ENCODE measurements at regions of chr12 and their contacts with region 1.

Region 1: DNA sequence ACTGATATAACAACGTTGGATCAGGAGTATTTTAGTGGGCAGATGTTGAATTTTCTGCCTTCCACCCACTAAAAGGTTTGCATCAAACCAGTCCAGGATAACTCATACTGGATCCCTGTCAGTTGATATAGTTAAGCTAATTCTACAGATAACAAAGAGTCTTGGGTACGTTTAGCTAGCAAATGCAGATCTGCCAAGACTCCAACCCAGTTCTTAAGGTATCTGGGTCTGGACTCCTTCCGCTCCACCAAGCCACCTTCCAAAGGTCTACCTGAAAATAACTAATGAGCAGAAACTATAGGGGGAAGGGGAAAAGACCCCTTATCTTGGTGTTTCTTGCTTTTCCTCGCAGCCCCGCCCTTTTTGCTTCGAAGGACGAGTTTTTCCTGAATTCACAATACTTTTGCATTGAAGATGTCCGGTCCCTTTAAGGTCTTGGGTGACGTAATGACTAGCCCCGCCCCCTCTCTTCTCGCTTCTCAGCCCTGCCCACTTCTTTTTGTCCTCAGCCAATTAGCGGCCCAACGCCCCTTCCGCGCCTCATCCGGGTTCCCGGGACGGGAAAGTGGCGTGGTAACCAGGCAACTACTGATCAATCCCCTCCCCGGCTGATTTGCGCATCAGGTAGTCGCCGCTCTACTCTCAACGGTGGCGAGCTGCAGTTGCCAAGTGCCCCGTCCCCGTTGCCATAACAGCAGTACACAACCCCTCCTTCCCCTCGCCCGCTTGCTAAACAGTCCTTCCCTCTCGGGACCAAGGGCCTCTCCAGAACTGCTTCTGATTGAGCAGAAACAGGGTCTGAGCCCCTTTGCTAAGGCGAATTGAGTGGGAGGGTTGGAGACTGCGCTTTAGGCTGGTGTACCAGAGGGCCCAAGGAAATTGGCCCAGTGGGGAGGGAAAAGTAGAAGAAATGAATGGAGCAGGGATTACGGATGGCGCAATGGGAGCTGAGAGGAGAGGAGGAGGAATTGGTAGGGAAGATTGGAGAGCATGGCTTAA is at the start of gene LRRC23:
- DNase-seq: peak; percentile 89 to 99
- H3K4me3 ChIP-seq: peak within 1 kb of the TSS; percentile 58 to 81
- H3K27ac ChIP-seq: peak within 1 kb of the TSS; percentile 73 to 82
- H3K4me1 ChIP-seq: peaks cover 0 to 5% of the 10 kb centered on the region in 2 donors
- H3K27me3 ChIP-seq: no peaks in the 10 kb centered on the region
- CTCF ChIP-seq: no peak
- total RNA-seq, gene LRRC23: 6.6 TPM

Region 2: DNA sequence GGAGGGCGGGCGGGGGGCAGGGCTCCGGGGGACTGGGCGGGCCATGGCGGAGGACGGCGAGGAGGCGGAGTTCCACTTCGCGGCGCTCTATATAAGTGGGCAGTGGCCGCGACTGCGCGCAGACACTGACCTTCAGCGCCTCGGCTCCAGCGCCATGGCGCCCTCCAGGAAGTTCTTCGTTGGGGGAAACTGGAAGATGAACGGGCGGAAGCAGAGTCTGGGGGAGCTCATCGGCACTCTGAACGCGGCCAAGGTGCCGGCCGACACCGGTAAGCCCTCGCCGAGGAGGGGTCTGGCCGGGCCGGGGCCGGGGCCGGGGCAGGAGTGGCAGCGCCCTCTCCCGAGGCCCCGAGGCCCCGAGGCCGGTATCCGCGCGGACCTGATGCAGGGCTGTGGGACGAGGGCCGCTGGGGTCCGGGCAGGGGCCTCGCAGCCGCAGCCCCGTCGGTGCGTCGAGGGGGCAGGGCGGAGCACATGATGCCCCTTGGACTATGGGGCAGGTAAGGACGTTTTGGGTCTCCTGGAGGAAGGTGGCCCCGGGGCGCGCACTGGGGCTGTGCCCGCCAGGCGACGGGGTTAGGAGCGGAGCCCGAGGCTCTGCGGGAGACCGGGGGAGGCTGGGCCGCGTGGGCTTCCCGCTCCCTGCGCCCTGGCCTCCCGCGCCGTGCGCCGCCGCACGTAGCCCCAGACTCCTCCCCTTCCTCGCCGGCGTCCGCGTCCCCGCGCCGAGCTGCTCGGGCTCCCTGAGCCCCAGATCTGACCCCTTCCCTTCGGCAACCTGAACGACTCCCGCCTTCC is 37.0 kb before region 1 on chr12 and contains the start of gene TPI1:
- intact Hi-C with region 1: loop called (anchors 1 kb)
- DNase-seq: no peak
- H3K4me3 ChIP-seq: peak within 1 kb of the TSS; percentile 91 to 94
- H3K27ac ChIP-seq: peak within 1 kb of the TSS; percentile 99
- H3K4me1 ChIP-seq: peaks cover 14 to 40% of the 10 kb centered on the region in 2 donors
- H3K27me3 ChIP-seq: no peaks in the 10 kb centered on the region
- CTCF ChIP-seq: peak in 2 of 3 experiments; percentile 3 to 11
- total RNA-seq, gene TPI1: 482 TPM

Region 3: GRCh38 chr12:6873094-6874014 is 31.2 kb before region 1 on chr12 and contains the start of gene SPSB2:
- intact Hi-C with region 1: loop called (anchors 1 kb)
- DNase-seq: peak; percentile 85 to 99
- H3K4me3 ChIP-seq: peak within 1 kb of the TSS; percentile 82 to 90
- H3K27ac ChIP-seq: peak within 1 kb of the TSS; percentile 85 to 92
- H3K4me1 ChIP-seq: peaks cover 13 to 28% of the 10 kb centered on the region in 2 donors
- H3K27me3 ChIP-seq: no peaks in the 10 kb centered on the region
- CTCF ChIP-seq: no peak
- total RNA-seq, gene SPSB2: 14.5 TPM

Region 4: GRCh38 chr12:6890789-6891645 is 13.6 kb before region 1 on chr12:
- intact Hi-C with region 1: loop called (anchors 1 kb)
- DNase-seq: peak; percentile 88 to 98
- H3K4me3 ChIP-seq: peak overlapping the region; percentile 54 to 72
- H3K27ac ChIP-seq: peak overlapping the region; percentile 92 to 93
- H3K4me1 ChIP-seq: peaks cover 0 to 6% of the 10 kb centered on the region in 2 donors
- H3K27me3 ChIP-seq: no peaks in the 10 kb centered on the region
- CTCF ChIP-seq: peak; percentile 82 to 94 (median 83)

Region 5: DNA sequence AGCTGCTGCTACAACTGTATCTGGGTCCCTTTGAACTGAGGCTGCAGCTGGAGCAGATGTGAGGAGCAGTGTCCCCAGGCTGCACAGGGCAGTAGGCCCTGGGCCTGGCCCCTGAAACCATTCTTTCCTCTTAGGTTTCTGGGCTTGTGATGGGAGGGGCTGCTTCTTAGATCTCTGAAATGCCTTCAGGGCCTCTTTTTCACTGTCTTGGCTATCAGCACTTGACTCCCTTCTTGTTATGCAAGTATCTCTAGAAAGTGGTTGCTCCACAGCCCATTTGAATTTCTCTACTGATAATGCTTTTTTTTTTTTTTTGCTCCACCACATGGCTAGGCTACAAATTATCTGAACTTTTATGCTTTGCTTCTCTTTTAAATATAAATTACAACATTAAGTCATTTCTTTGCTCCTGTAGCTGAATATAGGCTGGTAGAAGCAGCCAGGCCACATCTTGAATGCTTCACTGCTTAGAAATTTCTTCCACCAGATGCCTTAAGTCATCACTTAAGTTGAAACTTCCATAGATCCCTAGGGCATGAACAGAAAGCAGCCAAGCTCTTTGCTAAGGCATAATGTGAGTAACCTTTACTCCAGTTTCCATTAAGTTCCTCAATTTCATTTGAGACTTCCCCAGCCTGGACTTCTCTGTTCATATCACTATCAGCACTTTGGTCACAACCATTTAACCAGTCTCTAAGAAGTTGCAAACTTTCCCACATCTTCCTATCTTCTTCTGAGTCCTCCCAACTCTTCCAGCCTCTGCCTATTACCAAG is 440.4 kb after region 1 on chr12:
- intact Hi-C with region 1: no loop called
- DNase-seq: no peak
- H3K4me3 ChIP-seq: no peak overlapping the region
- H3K27ac ChIP-seq: no peak overlapping the region
- H3K4me1 ChIP-seq: no peaks in the 10 kb centered on the region
- H3K27me3 ChIP-seq: no peaks in the 10 kb centered on the region
- CTCF ChIP-seq: no peak